Natural killer cell (primary cell): ENCODE measurements at regions of chr6 and their contacts with region 1.

Region 1: DNA sequence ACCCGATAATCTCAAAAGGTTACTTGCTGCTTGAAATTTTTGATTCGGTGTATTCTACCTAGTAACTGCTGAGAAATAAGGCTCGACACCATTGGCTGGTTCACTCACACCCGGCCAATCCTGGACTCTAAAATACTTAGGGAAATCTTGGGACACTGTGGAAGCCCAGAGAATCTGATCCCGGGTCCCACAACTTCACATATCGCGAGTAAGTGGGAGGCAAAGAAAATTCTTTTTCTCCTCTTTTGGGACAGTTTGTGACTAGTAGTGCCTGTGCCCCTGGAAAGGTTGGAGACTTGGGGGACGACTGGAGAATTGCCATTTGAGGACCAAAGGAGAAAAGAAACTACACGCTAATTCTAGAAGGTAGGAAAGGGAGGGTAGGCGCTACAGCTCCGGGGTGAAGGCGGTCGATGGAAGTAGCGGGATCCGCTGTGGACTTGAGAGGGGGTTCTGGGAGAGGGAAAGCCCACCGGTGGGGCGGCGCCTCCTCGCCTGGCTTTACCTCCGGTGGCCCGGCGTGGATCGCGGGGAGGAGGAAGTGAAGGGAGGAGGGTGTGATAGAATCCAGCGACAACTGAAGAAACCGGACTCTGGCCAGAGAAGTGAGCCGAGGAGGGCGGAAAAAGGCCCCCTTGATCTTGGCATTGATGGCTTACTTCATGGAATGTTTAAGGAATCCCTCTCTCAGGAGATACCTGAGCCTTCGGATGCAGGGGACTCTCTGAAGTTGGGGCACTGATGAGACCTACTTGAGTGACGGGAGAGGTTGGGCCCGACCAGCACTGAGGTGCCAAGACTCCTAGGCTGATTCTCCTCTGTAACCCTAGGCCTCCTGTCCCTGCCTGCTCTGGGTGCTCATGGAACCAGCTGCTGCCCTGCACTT is 18.8 kb upstream of the BTN3A3 start:
- DNase-seq: peak; percentile 33 to 84
- ATAC-seq: peak; percentile 93 to 97 (median 95)
- H3K4me3 ChIP-seq: peak overlapping the region; percentile 83
- H3K4me3 Mint-ChIP-seq: no peak overlapping the region
- H3K27ac ChIP-seq: peak overlapping the region; percentile 64
- H3K27ac Mint-ChIP-seq: no peak overlapping the region
- H3K4me1 ChIP-seq: peaks cover 12% of the 10 kb centered on the region
- H3K4me1 Mint-ChIP-seq: peaks cover 0 to 7% of the 10 kb centered on the region in 2 donors
- H3K27me3 ChIP-seq: no peaks in the 10 kb centered on the region
- H3K27me3 Mint-ChIP-seq: no peaks in the 10 kb centered on the region
- CTCF ChIP-seq: no peak

Region 2: DNA sequence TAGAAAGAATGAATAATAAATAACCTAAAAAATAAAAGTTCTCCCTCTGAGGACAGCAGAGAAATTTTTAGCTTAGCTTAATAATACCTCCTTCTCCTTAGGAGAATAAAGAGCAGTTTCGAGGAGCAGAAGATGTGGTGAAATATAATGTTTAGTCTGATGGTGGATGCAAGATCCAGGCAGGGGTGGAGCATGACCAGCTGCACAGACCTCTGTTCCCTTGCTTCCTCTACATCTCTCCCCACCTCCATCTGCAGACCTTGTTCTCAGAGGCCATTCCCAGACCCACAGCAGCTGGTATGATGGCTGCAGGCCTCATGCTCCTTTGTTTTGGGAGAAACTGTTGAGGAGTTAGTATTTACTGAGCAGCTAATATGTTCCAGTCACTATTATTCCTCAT is 55.0 kb before region 1 on chr6:
- intact Hi-C with region 1: loop called (anchors 5 kb)
- DNase-seq: peak in 1 of 2 donors; percentile 37
- ATAC-seq: no peak
- H3K4me3 ChIP-seq: peak overlapping the region; percentile 74
- H3K4me3 Mint-ChIP-seq: no peak overlapping the region
- H3K27ac ChIP-seq: no peak overlapping the region
- H3K27ac Mint-ChIP-seq: no peak overlapping the region
- H3K4me1 ChIP-seq: peaks cover 41% of the 10 kb centered on the region
- H3K4me1 Mint-ChIP-seq: peaks cover 52 to 56% of the 10 kb centered on the region in 2 donors
- H3K27me3 ChIP-seq: no peaks in the 10 kb centered on the region
- H3K27me3 Mint-ChIP-seq: no peaks in the 10 kb centered on the region
- CTCF ChIP-seq: no peak